ENCODE measurements at regions of chr6 and their contacts with region 1.

Region 1: DNA sequence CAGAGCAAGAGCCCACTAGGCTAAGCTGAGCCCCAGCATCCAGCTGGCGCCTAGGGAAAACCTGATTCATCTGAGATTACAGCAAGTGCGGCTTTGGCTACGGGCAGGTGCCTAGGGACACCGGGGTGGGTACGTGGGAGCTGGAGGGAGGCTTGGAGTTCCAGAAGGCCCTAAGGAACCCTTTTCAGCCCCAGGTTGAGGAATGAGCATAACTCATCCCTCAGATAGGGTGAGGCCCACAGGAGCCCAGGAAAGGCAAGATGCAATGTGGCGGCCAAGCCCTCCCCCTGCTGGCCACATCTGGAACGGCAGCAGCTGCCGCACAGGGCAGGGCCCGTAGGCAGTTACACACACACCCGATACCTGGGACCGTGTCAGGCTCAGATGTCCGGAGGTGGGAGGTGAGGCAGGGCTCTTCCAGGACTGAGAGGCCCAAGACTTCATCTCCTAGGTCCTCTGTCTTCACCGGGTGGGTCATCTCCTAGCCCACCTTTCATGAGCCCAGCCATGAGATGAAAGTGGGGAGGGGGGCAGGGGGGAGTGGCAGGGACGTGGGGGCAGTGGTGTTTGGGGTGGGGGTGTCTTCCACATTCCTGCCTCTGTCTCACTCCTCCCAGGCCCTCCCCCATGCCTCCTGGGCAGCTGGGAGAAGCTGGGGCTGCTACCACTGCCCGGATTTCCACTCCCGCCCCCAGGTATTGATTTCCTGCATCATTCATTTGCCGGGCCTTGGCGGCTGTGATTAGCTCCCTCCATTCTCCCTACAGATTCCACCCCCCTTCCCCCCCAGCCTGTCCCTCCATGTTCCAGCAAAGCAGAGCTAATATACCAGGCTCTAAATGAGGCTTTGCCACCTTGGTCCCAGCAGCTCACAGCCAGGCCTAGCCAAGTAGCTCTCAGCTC is 5.5 kb downstream of the MDGA1 start:
- DNase-seq: peak; percentile 69
- H3K4me3 Mint-ChIP-seq: no peak overlapping the region
- H3K27ac Mint-ChIP-seq: no peak overlapping the region
- H3K4me1 Mint-ChIP-seq: no peaks in the 10 kb centered on the region
- H3K27me3 Mint-ChIP-seq: peaks cover 48% of the 10 kb centered on the region
- CTCF ChIP-seq: peak; percentile 99

Region 2: GRCh38 chr6:37381579-37381978 is 310.6 kb before region 1 on chr6:
- CTCF ChIA-PET with region 1: interaction called, 10 read pairs
- POLR2A ChIA-PET with region 1: no interaction called
- intact Hi-C with region 1: loop called (anchors 1 kb)
- DNase-seq: peak; percentile 64
- H3K4me3 Mint-ChIP-seq: no peak overlapping the region
- H3K27ac Mint-ChIP-seq: no peak overlapping the region
- H3K4me1 Mint-ChIP-seq: no peaks in the 10 kb centered on the region
- H3K27me3 Mint-ChIP-seq: no peaks in the 10 kb centered on the region
- CTCF ChIP-seq: peak; percentile 49

Region 3: DNA sequence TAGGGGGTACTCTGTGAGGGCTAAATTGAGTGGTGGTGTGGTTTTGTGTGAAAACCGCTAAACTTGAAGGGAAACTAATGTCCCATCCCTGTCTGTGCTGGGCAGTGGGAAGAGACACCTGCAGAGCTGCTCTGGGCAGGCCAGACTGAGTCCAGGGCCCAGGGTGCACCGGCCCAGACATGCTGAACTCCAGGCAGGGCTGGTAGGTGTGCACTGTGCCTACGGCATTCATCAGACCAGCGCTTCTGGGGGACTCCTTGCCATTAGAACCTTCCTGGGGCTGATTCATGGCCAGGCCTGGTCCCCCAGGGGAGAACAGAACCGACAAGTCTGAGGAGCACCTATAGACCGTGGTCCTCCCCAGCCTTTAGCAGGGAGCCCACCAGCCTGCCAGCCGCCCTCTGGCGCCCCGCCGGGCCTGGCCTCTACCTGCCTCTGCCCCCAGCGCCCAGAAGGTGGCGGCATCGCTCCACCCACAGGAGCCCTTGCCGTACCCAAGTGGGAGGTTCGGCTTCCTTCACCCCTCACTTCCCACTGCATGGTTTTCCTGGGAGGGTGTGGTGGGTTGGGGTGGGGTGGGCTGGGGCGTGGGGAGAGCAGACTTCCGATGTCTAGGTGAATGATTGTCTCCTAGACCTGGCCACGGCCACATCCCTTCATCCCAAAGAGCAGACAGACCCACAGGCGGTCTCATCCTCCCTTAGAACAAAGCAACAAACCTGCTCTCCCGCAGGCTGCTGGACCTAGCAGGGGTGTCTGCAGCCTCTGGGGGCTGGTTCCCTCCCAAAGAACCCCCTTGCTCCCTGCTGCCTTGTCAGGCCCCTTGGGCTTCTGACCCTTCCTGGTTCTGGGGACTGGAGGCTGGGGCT is 208.0 kb before region 1 on chr6:
- CTCF ChIA-PET with region 1: interaction called, 7 read pairs
- POLR2A ChIA-PET with region 1: no interaction called
- intact Hi-C with region 1: loop called (anchors 1 kb)
- DNase-seq: peak; percentile 58
- H3K4me3 Mint-ChIP-seq: no peak overlapping the region
- H3K27ac Mint-ChIP-seq: no peak overlapping the region
- H3K4me1 Mint-ChIP-seq: peaks cover 10% of the 10 kb centered on the region
- H3K27me3 Mint-ChIP-seq: no peaks in the 10 kb centered on the region
- CTCF ChIP-seq: peak; percentile 81

Region 4: GRCh38 chr6:37566111-37566949 is 125.8 kb before region 1 on chr6:
- CTCF ChIA-PET with region 1: interaction called, 3 read pairs
- POLR2A ChIA-PET with region 1: no interaction called
- intact Hi-C with region 1: loop called (anchors 2 kb)
- DNase-seq: peak; percentile 34
- H3K4me3 Mint-ChIP-seq: no peak overlapping the region
- H3K27ac Mint-ChIP-seq: no peak overlapping the region
- H3K4me1 Mint-ChIP-seq: no peaks in the 10 kb centered on the region
- H3K27me3 Mint-ChIP-seq: peaks cover 18% of the 10 kb centered on the region
- CTCF ChIP-seq: peak; percentile 93

Region 5: DNA sequence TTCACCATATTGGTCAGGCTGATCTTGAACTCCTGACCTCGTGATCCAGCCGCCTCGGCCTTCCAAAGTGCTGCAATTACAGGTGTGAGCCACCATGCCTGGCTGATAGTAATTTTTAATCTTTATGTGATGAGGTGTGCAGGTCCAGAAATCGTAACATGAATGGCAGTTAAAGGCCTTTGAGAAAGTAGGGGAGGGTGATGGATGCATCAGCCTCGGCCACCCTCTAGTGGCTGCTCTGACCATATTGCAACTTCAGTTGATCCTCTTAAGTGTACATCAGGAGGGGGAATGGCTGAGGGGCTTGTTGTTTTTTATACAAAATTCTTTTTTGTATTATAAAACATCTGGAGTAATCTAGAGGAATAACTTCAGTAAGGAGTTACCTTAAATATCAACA is 320.4 kb after region 1 on chr6:
- CTCF ChIA-PET with region 1: no interaction called
- POLR2A ChIA-PET with region 1: no interaction called
- intact Hi-C with region 1: loop called (anchors 1 kb)
- DNase-seq: peak; percentile 66
- H3K4me3 Mint-ChIP-seq: no peak overlapping the region
- H3K27ac Mint-ChIP-seq: no peak overlapping the region
- H3K4me1 Mint-ChIP-seq: peaks cover 5% of the 10 kb centered on the region
- H3K27me3 Mint-ChIP-seq: no peaks in the 10 kb centered on the region
- CTCF ChIP-seq: peak; percentile 76